ENCODE measurements at regions of chr11 and their contacts with region 1.

Region 1: DNA sequence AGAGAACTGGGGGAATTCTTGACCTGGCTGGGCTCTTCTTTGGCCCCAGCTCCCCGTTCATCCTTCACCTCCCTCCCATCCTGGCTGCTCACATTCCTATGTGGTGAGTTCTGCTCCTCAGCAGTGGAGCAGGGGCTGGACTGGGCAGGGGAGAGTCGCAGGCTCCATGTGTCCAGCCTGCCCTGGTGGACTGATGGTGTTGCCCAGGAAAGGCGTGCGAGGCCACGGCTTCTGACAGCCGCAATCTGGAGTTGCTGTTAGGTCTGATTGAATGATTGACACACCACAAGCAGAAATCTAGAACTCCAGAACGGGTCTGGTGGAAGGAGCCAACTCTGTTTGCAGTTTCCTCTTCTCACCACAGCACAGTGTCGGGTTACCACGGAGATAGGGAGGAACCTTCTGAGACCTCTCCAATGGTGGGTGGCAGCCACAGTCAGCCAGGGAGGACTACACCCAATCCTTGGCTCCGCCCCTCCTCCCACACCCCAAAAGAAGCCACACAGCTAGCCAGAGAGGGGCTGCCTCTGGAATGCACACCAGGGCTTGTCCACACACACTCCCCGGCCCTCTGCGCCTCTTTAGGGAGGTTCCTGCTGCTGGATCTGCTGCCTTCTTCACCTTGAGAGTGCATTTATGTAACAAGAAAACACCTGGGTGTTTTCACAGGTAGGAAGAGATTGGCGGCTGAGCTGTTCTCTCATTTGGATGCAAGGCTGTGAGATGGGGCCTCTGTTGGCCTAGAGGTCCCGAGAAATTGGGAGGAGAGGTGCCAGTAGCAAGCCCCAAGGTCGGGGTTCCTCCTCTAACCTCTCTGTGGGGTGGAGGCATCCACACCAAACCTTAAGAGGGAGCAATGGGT is 56.4 kb upstream of the CD44 start:
- DNase-seq: peak; percentile 70 to 95 (median 84)
- ATAC-seq: peak; percentile 79
- H3K4me3 ChIP-seq: peak overlapping the region; percentile 12 to 40
- H3K4me3 Mint-ChIP-seq: peak overlapping the region; percentile 73
- H3K27ac ChIP-seq: peak overlapping the region; percentile 73 to 86
- H3K27ac Mint-ChIP-seq: peak overlapping the region; percentile 98
- H3K4me1 ChIP-seq: peaks cover 69% of the 10 kb centered on the region
- H3K4me1 Mint-ChIP-seq: peaks cover 83% of the 10 kb centered on the region
- H3K27me3 ChIP-seq: no peaks in the 10 kb centered on the region
- H3K27me3 Mint-ChIP-seq: no peaks in the 10 kb centered on the region
- CTCF ChIP-seq: no peak

Region 2: DNA sequence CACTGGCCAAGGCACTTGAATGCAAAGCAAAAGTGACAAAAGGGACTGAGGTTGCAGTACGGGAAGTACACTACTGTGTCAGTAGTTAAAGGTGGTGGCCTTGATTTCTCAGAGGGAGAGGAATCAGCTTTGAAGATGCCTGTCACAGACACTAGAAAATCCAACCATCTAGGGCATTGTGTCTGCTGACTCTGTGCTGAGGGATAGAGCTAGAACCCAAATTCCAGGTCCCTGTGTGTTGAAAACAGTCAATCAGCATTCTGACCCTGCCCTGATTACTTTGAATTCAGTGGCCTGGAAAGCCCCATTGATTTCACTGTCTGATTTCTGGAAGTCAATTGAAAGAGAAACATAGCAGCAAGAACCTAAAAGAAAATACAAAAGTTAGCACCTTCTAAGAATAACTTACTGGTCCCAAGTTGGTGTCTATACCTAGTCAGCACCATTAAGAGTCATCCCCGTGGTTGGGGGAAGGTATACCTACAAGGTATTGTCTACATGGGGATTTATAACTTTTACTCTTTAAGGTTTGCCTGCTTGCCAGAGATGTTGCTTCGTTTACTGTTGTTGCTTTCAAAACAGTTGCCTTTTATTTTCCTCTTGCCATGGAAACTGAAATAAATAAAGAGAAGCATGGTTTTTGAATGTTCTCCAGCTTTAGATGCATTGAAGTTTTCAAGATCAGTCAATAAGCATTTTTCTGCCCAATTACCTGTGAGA is 68.9 kb before region 1 on chr11:
- CTCF ChIA-PET with region 1: no interaction called
- POLR2A ChIA-PET with region 1: interaction called, 3 read pairs
- intact Hi-C with region 1: loop called in 1 of 2 experiments (anchors 5 kb)
- DNase-seq: peak in 5 of 9 experiments; percentile 5 to 76 (median 43)
- ATAC-seq: peak; percentile 74
- H3K4me3 ChIP-seq: no peak overlapping the region
- H3K4me3 Mint-ChIP-seq: peak overlapping the region; percentile 24
- H3K27ac ChIP-seq: peak overlapping the region in 1 of 2 experiments; percentile 25
- H3K27ac Mint-ChIP-seq: peak overlapping the region; percentile 87
- H3K4me1 ChIP-seq: peaks cover 21% of the 10 kb centered on the region
- H3K4me1 Mint-ChIP-seq: peaks cover 24% of the 10 kb centered on the region
- H3K27me3 ChIP-seq: no peaks in the 10 kb centered on the region
- H3K27me3 Mint-ChIP-seq: no peaks in the 10 kb centered on the region
- CTCF ChIP-seq: no peak

Region 3: GRCh38 chr11:35040221-35040942 is 42.2 kb before region 1 on chr11:
- CTCF ChIA-PET with region 1: interaction called, 4 read pairs
- POLR2A ChIA-PET with region 1: interaction called, 12 read pairs
- intact Hi-C with region 1: loop called (anchors 1 to 2 kb)
- DNase-seq: peak in 8 of 9 experiments; percentile 16 to 87 (median 55)
- ATAC-seq: peak; percentile 77
- H3K4me3 ChIP-seq: peak overlapping the region in 1 of 2 experiments; percentile 46
- H3K4me3 Mint-ChIP-seq: peak overlapping the region; percentile 79
- H3K27ac ChIP-seq: peak overlapping the region; percentile 36 to 83
- H3K27ac Mint-ChIP-seq: peak overlapping the region; percentile 97
- H3K4me1 ChIP-seq: peaks cover 25% of the 10 kb centered on the region
- H3K4me1 Mint-ChIP-seq: peaks cover 35% of the 10 kb centered on the region
- H3K27me3 ChIP-seq: no peaks in the 10 kb centered on the region
- H3K27me3 Mint-ChIP-seq: no peaks in the 10 kb centered on the region
- CTCF ChIP-seq: no peak

Region 4: DNA sequence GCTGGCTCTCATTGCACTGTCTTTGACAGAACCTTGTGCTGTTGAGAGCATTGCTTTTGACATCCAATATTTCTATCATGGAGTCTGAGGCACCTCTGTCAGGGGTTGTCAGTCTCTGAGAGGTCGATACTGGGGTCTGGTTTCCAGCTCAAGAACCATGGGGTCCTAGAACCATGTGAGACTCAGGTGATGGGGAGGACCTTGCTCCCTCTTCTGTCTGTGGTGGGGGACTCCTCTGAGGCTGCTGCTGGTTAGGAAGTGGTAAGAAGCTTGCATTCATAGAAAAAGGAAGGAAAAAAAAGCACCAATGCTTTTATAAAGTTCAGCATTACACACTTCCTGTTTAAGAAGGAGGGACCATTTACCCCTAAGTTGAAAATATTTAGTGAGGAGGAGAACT is 35.4 kb before region 1 on chr11:
- CTCF ChIA-PET with region 1: interaction called, 4 read pairs
- POLR2A ChIA-PET with region 1: interaction called, 12 read pairs
- intact Hi-C with region 1: loop called (anchors 1 to 2 kb)
- DNase-seq: peak in 8 of 9 experiments; percentile 26 to 92 (median 68)
- ATAC-seq: peak; percentile 62
- H3K4me3 ChIP-seq: no peak overlapping the region
- H3K4me3 Mint-ChIP-seq: peak overlapping the region; percentile 36
- H3K27ac ChIP-seq: peak overlapping the region; percentile 53 to 96
- H3K27ac Mint-ChIP-seq: peak overlapping the region; percentile 100
- H3K4me1 ChIP-seq: peaks cover 69% of the 10 kb centered on the region
- H3K4me1 Mint-ChIP-seq: peaks cover 80% of the 10 kb centered on the region
- H3K27me3 ChIP-seq: no peaks in the 10 kb centered on the region
- H3K27me3 Mint-ChIP-seq: no peaks in the 10 kb centered on the region
- CTCF ChIP-seq: no peak

Region 5: GRCh38 chr11:35058669-35059434 is 23.7 kb before region 1 on chr11:
- CTCF ChIA-PET with region 1: no interaction called
- POLR2A ChIA-PET with region 1: interaction called, 3 read pairs
- intact Hi-C with region 1: loop called in 1 of 2 experiments (anchors 2 kb)
- DNase-seq: peak in 1 of 9 experiments; percentile 44
- ATAC-seq: peak; percentile 38
- H3K4me3 ChIP-seq: no peak overlapping the region
- H3K4me3 Mint-ChIP-seq: no peak overlapping the region
- H3K27ac ChIP-seq: peak overlapping the region in 1 of 2 experiments; percentile 52
- H3K27ac Mint-ChIP-seq: peak overlapping the region; percentile 21
- H3K4me1 ChIP-seq: peaks cover 24% of the 10 kb centered on the region
- H3K4me1 Mint-ChIP-seq: peaks cover 38% of the 10 kb centered on the region
- H3K27me3 ChIP-seq: no peaks in the 10 kb centered on the region
- H3K27me3 Mint-ChIP-seq: no peaks in the 10 kb centered on the region
- CTCF ChIP-seq: no peak

Measured in CD8-positive, alpha-beta T cell (primary cell).